Heart left ventricle (tissue), 16 donors: ENCODE measurements at regions of chr9 and their contacts with region 1.

Region 1: GRCh38 chr9:37753489-37754190 is at the start of gene TRMT10B:
- DNase-seq: peak; percentile 67 to 80 (median 75)
- ATAC-seq: peak; percentile 84 to 97 (median 94)
- H3K4me3 ChIP-seq: peak within 1 kb of the TSS; percentile 69 to 95 (median 86)
- H3K27ac ChIP-seq: peak within 1 kb of the TSS; percentile 56 to 88 (median 80)
- H3K4me1 ChIP-seq: peaks cover 0 to 15% (median 7%) of the 10 kb centered on the region in 12 donors
- H3K27me3 ChIP-seq: no peaks in the 10 kb centered on the region
- CTCF ChIP-seq: no peak
- POLR2A ChIP-seq: no peak
- total RNA-seq, gene TRMT10B: 2.7 to 5.5 (median 3.5) TPM

Region 2: DNA sequence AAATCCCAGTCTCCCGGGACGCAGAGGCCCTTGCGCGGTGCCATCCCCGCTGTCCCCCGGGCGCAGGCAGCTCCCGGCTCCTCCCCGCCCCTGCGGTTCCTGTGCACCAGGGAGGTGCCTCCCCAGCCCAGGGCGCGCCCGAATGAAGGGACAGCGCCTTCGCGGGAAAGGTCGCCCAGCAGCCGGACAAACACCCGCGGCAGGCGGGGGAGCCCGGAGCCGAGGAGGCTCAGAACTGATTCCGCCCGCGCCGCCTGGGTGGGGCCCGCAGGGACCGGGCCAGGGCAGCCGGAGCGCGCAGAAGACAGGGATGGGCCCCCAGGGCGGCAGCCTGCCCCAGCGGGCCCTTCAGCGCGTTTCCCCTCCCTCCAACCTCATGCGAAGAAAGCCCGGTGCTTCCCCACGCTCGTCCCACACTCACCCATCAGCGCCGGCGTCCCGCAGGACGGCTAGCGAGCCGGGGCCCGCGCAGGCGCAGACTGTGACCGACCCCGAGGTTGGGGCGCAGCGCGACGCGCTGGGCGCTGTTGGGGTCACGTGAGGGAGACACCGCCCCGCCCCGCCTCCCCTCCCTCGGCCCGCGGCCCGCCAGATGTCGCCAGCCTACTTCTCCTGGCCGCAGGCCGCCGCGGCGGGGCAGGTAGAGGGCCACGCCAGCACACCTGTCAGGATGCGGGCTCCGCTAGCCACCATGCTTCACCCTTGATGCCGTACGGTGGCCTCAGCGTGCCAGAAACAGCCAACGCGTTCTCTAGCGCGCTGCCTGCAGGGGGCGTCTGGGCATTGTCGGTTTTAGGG is 150.2 kb after region 1 on chr9 and contains the start of gene SLC25A51:
- intact Hi-C with region 1: loop called in 1 of 10 experiments (anchors 2 kb)
- DNase-seq: peak; percentile 93 to 97 (median 95)
- ATAC-seq: peak; percentile 83 to 94 (median 94)
- H3K4me3 ChIP-seq: peak within 1 kb of the TSS; percentile 71 to 99 (median 93)
- H3K27ac ChIP-seq: peak within 1 kb of the TSS; percentile 43 to 96 (median 88)
- H3K4me1 ChIP-seq: peaks cover 0 to 29% (median 21%) of the 10 kb centered on the region in 12 donors
- H3K27me3 ChIP-seq: no peaks in the 10 kb centered on the region
- CTCF ChIP-seq: peak; percentile 83 to 97 (median 92)
- POLR2A ChIP-seq: peak in 1 of 2 donors; percentile 71
- total RNA-seq, gene SLC25A51: 18.9 to 27.6 (median 22.9) TPM

Region 3: GRCh38 chr9:38079461-38080031 is 325.9 kb after region 1 on chr9:
- intact Hi-C with region 1: loop called in 1 of 10 experiments (anchors 10 kb)
- DNase-seq: peak in 2 of 5 donors; percentile 25 to 59
- ATAC-seq: peak in 3 of 4 donors; percentile 19 to 51 (median 38)
- H3K4me3 ChIP-seq: no peak overlapping the region
- H3K27ac ChIP-seq: peak overlapping the region in 1 of 12 donors; percentile 33
- H3K4me1 ChIP-seq: peaks cover 0 to 49% (median 11%) of the 10 kb centered on the region in 12 donors
- H3K27me3 ChIP-seq: no peaks in the 10 kb centered on the region
- CTCF ChIP-seq: no peak
- POLR2A ChIP-seq: no peak

Region 4: DNA sequence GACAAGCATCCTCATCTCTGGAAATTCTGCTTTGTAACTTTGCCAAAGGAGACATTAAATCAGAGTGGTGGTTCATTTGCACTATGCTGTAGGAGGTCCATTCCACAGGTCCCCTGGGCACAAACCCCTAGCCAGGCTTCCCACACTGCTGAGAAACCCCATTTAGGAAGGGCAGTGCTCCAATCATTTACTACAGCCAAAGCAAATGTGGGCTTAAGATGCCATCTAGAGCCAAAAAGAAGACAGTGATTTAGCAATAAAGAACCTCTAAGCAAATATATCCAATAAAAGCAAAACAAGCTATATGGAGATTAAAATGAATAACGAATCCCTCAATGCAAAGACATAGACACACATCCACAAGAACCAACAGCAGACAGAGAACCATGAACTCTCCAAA is 509.9 kb after region 1 on chr9:
- intact Hi-C with region 1: loop called in 1 of 10 experiments (anchors 10 kb)
- DNase-seq: no peak
- ATAC-seq: no peak
- H3K4me3 ChIP-seq: no peak overlapping the region
- H3K27ac ChIP-seq: no peak overlapping the region
- H3K4me1 ChIP-seq: no peaks in the 10 kb centered on the region
- H3K27me3 ChIP-seq: peaks cover 0 to 4% (median 0%) of the 10 kb centered on the region in 9 donors
- CTCF ChIP-seq: peak in 4 of 12 donors; percentile 10 to 29 (median 21)
- POLR2A ChIP-seq: no peak